Activated CD4-positive, alpha-beta memory T cell treated with anti-CD3 and anti-CD28 coated beads, Interleukin-2, amount 10 ng/mL, durations not matched to agents 7 days and 5 days (primary cell): ENCODE measurements at regions of chr6 and their contacts with region 1.

Region 1: DNA sequence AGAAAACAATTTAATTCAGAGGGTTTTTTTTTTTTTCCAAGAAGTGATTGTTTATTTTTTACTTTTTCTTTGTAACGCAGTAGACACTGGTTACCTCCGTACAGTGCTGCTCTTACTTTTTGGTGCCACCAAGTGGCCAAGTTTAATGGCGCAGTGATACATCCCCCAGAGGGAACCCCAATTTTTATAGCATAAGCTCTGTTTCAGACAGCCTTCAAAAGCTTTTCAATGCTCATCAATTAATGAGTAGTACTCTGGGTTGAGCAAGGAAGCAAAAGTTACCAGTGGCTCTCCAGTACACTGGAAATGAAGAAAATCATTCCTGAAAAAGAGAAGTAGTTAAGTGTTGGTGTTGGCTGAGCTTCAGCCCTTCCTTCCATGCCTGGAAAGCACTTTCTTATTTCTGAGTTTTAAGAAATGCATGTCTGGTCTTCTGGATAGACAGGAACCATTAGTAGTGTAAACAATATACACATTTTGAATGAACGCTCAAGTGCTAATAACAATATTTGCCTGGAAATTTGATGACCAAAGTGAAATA is 129.1 kb upstream of the SMLR1 start:
- DNase-seq: peak; percentile 79
- H3K4me3 Mint-ChIP-seq: peak overlapping the region; percentile 33
- H3K27ac Mint-ChIP-seq: no peak overlapping the region
- H3K4me1 Mint-ChIP-seq: peaks cover 39% of the 10 kb centered on the region
- H3K27me3 Mint-ChIP-seq: no peaks in the 10 kb centered on the region

Region 2: GRCh38 chr6:130322673-130323268 is 375.3 kb before region 1 on chr6:
- CTCF ChIA-PET with region 1: interaction called, 31 read pairs
- POLR2A ChIA-PET with region 1: interaction called, 3 read pairs
- DNase-seq: peak; percentile 60
- H3K4me3 Mint-ChIP-seq: no peak overlapping the region
- H3K27ac Mint-ChIP-seq: no peak overlapping the region
- H3K4me1 Mint-ChIP-seq: peaks cover 5% of the 10 kb centered on the region
- H3K27me3 Mint-ChIP-seq: no peaks in the 10 kb centered on the region

Region 3: GRCh38 chr6:130381459-130382380 is 316.3 kb before region 1 on chr6:
- CTCF ChIA-PET with region 1: interaction called, 14 read pairs
- POLR2A ChIA-PET with region 1: no interaction called
- DNase-seq: peak; percentile 59
- H3K4me3 Mint-ChIP-seq: no peak overlapping the region
- H3K27ac Mint-ChIP-seq: peak overlapping the region; percentile 11
- H3K4me1 Mint-ChIP-seq: peaks cover 23% of the 10 kb centered on the region
- H3K27me3 Mint-ChIP-seq: no peaks in the 10 kb centered on the region

Region 4: GRCh38 chr6:130670142-130670541 is 27.9 kb before region 1 on chr6:
- CTCF ChIA-PET with region 1: no interaction called
- POLR2A ChIA-PET with region 1: no interaction called
- DNase-seq: no peak
- H3K4me3 Mint-ChIP-seq: no peak overlapping the region
- H3K27ac Mint-ChIP-seq: no peak overlapping the region
- H3K4me1 Mint-ChIP-seq: peaks cover 3% of the 10 kb centered on the region
- H3K27me3 Mint-ChIP-seq: no peaks in the 10 kb centered on the region

Region 5: GRCh38 chr6:130716466-130716865 is 18.4 kb after region 1 on chr6:
- CTCF ChIA-PET with region 1: interaction called, 15 read pairs
- POLR2A ChIA-PET with region 1: interaction called, 9 read pairs
- DNase-seq: no peak
- H3K4me3 Mint-ChIP-seq: no peak overlapping the region
- H3K27ac Mint-ChIP-seq: no peak overlapping the region
- H3K4me1 Mint-ChIP-seq: peaks cover 49% of the 10 kb centered on the region
- H3K27me3 Mint-ChIP-seq: no peaks in the 10 kb centered on the region